ENCODE measurements at regions of chr11 and their contacts with region 1.

Region 1: DNA sequence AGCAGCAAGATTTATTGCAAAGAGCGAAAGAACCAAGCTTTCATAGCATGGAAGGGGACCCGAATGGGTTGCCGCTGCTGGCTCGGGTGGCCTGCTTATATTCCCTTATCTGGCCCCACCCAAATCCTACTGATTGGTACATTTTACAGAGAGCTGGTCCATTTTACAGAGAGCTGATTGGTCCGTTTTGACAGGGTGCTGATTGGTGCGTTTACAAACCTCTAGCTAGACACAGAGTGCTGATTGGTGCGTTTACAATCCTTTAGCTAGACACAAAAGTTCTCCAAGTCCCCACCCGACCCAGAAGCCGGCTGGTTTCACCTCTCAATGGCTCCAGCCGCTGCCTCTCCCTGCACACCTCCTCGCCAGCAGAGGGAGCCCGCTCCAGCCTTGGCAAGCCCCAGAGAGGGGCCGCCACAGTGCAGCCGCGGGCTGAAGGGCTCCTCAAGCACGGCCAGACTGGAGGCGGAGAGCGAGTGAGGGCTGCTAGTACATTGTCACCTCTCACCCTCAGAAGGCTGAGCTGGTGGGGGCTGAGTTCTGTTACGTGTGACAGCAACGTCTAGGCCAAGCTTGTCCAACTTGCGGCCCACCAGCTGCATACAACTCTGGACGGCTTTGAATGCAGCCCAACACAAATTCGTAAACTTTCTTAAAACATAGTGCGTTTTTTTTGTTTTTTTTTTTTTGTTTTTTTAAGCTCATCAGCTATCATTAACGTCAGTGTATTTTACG is 8.7 kb downstream of the PTH start:
- DNase-seq: peak; percentile 84
- H3K4me3 Mint-ChIP-seq: peak overlapping the region; percentile 57
- H3K27ac Mint-ChIP-seq: no peak overlapping the region
- H3K4me1 Mint-ChIP-seq: peaks cover 8% of the 10 kb centered on the region
- H3K27me3 Mint-ChIP-seq: peaks cover 41% of the 10 kb centered on the region
- CTCF ChIP-seq: peak; percentile 62

Region 2: GRCh38 chr11:13668102-13668956 is 181.2 kb after region 1 on chr11 and contains the start of gene FAR1:
- CTCF ChIA-PET with region 1: no interaction called
- intact Hi-C with region 1: loop called (anchors 10 kb)
- DNase-seq: peak; percentile 98
- H3K4me3 Mint-ChIP-seq: peak within 1 kb of the TSS; percentile 94
- H3K27ac Mint-ChIP-seq: peak within 1 kb of the TSS; percentile 81
- H3K4me1 Mint-ChIP-seq: peaks cover 30% of the 10 kb centered on the region
- H3K27me3 Mint-ChIP-seq: no peaks in the 10 kb centered on the region
- CTCF ChIP-seq: peak; percentile 53
- total RNA-seq, gene FAR1: 98.9 and 99.6 TPM in 2 replicates

Measured in Calu3 (cell line).